CD8-positive, alpha-beta T cell (primary cell): ENCODE measurements at regions of chr14 and their contacts with region 1.

Region 1: DNA sequence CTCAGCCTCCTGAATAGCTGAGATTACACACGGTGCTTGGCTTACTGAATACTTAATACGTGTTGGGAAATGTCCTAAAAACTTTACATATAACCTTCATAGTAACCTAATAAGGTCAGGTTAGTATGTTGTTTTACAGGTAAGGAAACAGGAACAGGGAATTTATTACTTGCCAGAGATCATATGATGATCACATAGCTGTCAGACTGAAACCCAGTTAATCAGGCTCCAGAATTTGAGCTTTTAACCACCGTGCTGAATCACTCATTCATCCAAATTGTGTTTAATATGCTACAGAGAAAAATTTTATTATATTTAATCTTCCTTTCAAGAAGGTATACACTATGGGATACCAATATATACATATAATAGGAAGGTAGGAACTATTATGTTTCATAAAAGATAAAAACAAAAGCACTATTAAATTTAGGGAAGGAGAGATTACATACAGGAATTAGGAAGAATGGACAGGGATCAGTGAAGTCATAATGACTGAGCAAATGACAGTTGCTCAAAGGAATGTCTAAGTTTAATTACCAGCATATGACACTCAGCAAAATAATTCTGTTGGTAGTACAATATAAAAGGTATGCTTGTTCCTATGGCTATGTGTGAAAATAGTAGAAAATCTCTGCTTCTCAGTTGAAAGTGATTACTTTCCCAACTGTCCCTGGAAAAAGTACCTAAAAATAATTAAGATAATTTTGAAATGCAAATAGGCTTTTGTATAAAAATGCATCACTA is 59.3 kb downstream of the HEATR5A start:
- DNase-seq: no peak
- ATAC-seq: no peak
- H3K4me3 ChIP-seq: no peak overlapping the region
- H3K4me3 Mint-ChIP-seq: no peak overlapping the region
- H3K27ac ChIP-seq: no peak overlapping the region
- H3K27ac Mint-ChIP-seq: no peak overlapping the region
- H3K4me1 ChIP-seq: no peaks in the 10 kb centered on the region
- H3K4me1 Mint-ChIP-seq: peaks cover under 1% of the 10 kb centered on the region
- H3K27me3 ChIP-seq: no peaks in the 10 kb centered on the region
- H3K27me3 Mint-ChIP-seq: no peaks in the 10 kb centered on the region
- CTCF ChIP-seq: no peak

Region 2: DNA sequence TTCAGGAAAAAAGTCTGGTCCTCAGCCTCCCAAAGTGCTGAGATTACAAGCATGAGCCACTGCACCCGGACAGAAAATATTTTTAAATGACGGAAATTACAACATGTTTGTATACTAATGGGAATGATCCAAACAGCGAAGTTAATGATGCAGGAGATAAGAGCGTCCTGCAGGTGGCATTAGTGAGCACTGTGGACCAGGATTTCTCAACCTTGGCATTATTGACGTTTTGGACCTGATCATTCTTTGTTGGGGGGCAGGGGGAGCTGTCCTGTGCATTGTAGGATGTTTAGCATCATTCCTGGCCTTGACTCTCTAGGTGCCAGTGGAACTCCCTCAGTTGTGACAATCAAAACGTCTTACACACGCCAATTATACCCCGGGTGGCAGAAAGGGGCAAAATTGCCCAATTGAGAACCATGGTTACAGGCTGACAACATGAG is 704.9 kb before region 1 on chr14:
- CTCF ChIA-PET with region 1: no interaction called
- POLR2A ChIA-PET with region 1: no interaction called
- intact Hi-C with region 1: loop called (anchors 1 to 2 kb)
- DNase-seq: peak in 7 of 9 experiments; percentile 1 to 65 (median 24)
- ATAC-seq: peak; percentile 83
- H3K4me3 ChIP-seq: no peak overlapping the region
- H3K4me3 Mint-ChIP-seq: no peak overlapping the region
- H3K27ac ChIP-seq: no peak overlapping the region
- H3K27ac Mint-ChIP-seq: no peak overlapping the region
- H3K4me1 ChIP-seq: no peaks in the 10 kb centered on the region
- H3K4me1 Mint-ChIP-seq: no peaks in the 10 kb centered on the region
- H3K27me3 ChIP-seq: no peaks in the 10 kb centered on the region
- H3K27me3 Mint-ChIP-seq: no peaks in the 10 kb centered on the region
- CTCF ChIP-seq: peak; percentile 70

Region 3: GRCh38 chr14:30982533-30982932 is 378.6 kb before region 1 on chr14:
- CTCF ChIA-PET with region 1: interaction called, 3 read pairs
- POLR2A ChIA-PET with region 1: no interaction called
- intact Hi-C with region 1: loop called (anchors 1 kb)
- DNase-seq: no peak
- ATAC-seq: no peak
- H3K4me3 ChIP-seq: no peak overlapping the region
- H3K4me3 Mint-ChIP-seq: no peak overlapping the region
- H3K27ac ChIP-seq: no peak overlapping the region
- H3K27ac Mint-ChIP-seq: no peak overlapping the region
- H3K4me1 ChIP-seq: no peaks in the 10 kb centered on the region
- H3K4me1 Mint-ChIP-seq: peaks cover 20% of the 10 kb centered on the region
- H3K27me3 ChIP-seq: no peaks in the 10 kb centered on the region
- H3K27me3 Mint-ChIP-seq: no peaks in the 10 kb centered on the region
- CTCF ChIP-seq: no peak

Region 4: GRCh38 chr14:31118892-31119291 is 242.2 kb before region 1 on chr14:
- CTCF ChIA-PET with region 1: no interaction called
- POLR2A ChIA-PET with region 1: no interaction called
- intact Hi-C with region 1: loop called in 1 of 2 experiments (anchors 5 kb)
- DNase-seq: no peak
- ATAC-seq: no peak
- H3K4me3 ChIP-seq: no peak overlapping the region
- H3K4me3 Mint-ChIP-seq: no peak overlapping the region
- H3K27ac ChIP-seq: no peak overlapping the region
- H3K27ac Mint-ChIP-seq: no peak overlapping the region
- H3K4me1 ChIP-seq: peaks cover 7% of the 10 kb centered on the region
- H3K4me1 Mint-ChIP-seq: peaks cover 11% of the 10 kb centered on the region
- H3K27me3 ChIP-seq: no peaks in the 10 kb centered on the region
- H3K27me3 Mint-ChIP-seq: no peaks in the 10 kb centered on the region
- CTCF ChIP-seq: no peak

Region 5: DNA sequence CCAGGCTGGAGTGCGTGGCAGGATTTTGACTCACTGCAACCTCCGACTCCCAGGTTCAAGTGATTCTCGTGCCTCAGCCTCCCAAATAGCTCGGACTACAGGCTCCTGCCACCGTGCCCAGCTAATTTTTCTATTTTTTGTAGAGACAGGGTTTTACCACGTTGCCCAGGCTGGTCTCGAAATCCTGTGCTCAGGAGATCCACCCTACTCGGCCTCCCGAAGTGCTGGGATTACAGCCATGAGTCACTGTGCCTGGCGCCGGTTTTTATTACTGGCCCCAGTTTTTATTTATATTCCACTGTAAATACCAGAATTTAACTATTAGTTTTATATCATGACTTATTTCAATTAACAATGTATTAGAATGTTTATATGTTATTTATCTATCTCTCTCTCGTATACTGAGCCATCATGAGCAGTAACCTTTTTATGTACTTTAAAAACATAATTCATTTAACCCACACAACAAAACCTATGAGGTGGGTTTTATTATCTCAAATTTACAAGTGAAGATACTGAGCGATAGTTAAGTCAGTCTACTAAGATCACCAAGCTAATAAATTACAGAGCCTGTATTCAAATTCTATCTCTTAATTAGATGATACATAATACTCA is 201.3 kb before region 1 on chr14:
- CTCF ChIA-PET with region 1: no interaction called
- POLR2A ChIA-PET with region 1: no interaction called
- intact Hi-C with region 1: loop called in 1 of 2 experiments (anchors 10 kb)
- DNase-seq: no peak
- ATAC-seq: no peak
- H3K4me3 ChIP-seq: no peak overlapping the region
- H3K4me3 Mint-ChIP-seq: no peak overlapping the region
- H3K27ac ChIP-seq: no peak overlapping the region
- H3K27ac Mint-ChIP-seq: no peak overlapping the region
- H3K4me1 ChIP-seq: no peaks in the 10 kb centered on the region
- H3K4me1 Mint-ChIP-seq: no peaks in the 10 kb centered on the region
- H3K27me3 ChIP-seq: no peaks in the 10 kb centered on the region
- H3K27me3 Mint-ChIP-seq: no peaks in the 10 kb centered on the region
- CTCF ChIP-seq: no peak

Region 6: GRCh38 chr14:31400031-31400638 is 39.0 kb after region 1 on chr14:
- CTCF ChIA-PET with region 1: no interaction called
- POLR2A ChIA-PET with region 1: no interaction called
- intact Hi-C with region 1: no loop called
- DNase-seq: no peak
- ATAC-seq: no peak
- H3K4me3 ChIP-seq: no peak overlapping the region
- H3K4me3 Mint-ChIP-seq: no peak overlapping the region
- H3K27ac ChIP-seq: no peak overlapping the region
- H3K27ac Mint-ChIP-seq: no peak overlapping the region
- H3K4me1 ChIP-seq: no peaks in the 10 kb centered on the region
- H3K4me1 Mint-ChIP-seq: peaks cover 2% of the 10 kb centered on the region
- H3K27me3 ChIP-seq: no peaks in the 10 kb centered on the region
- H3K27me3 Mint-ChIP-seq: no peaks in the 10 kb centered on the region
- CTCF ChIP-seq: no peak